ENCODE measurements at regions of chr3 and their contacts with region 1.

Region 1: GRCh38 chr3:195271116-195271858 is at the start of gene XXYLT1:
- DNase-seq: peak; percentile 95
- total RNA-seq, gene XXYLT1: 5.9 TPM

Region 2: GRCh38 chr3:195334966-195335365 is 63.7 kb after region 1 on chr3:
- intact Hi-C with region 1: no loop called
- DNase-seq: no peak

Region 3: GRCh38 chr3:195442573-195443390 is 171.5 kb after region 1 on chr3 and contains the start of gene ACAP2:
- intact Hi-C with region 1: loop called (anchors 5 kb)
- DNase-seq: peak; percentile 100
- total RNA-seq, gene ACAP2: 20.0 TPM

Region 4: DNA sequence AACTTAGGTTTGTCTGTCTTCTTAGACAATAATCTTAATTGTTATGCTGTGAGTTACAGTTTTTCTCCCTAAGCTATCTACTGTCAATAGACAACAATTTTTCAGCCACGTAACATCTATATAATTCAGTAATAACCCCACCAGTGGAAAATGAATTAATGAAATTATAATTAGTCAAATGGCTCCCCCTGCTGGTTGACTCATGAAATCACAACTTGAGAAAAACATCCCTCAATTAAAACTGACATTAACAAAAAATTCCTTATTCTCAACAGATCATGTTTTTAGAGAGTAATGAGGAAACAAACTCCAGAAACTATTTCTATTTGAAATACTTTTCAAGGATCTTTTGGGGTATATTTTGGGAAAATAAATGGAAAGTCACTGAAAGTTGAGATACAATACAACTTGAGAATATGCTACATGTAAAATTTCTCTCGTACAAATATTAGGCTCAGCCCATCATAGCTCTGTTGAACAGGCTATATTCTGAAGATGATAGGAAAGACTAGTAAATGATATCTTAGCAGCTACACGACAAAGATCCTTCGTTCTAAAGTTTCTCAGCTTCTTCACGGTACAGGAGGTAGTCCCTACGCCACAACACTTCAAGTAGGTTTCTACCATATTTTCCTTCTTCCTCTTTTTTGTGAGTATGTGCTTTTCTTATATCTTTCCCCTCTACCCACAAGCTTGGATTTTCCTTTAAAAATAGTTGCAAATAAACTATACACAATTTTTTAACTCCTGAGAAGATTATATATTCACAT is 251.2 kb after region 1 on chr3:
- intact Hi-C with region 1: loop called (anchors 1 kb)
- DNase-seq: no peak